Dorsolateral prefrontal cortex (tissue), 120 donors: ENCODE measurements at regions of chr2 and their contacts with region 1.

Region 1: GRCh38 chr2:158464426-158465281 is 7.9 kb downstream of the PKP4 start:
- DNase-seq: no peak
- H3K4me3 ChIP-seq: peak overlapping the region in 15 of 59 donors; percentile 4 to 36 (median 11)
- H3K27ac ChIP-seq: peak overlapping the region in 38 of 59 donors; percentile 3 to 98 (median 61)
- H3K27me3 ChIP-seq: no peaks in the 10 kb centered on the region
- CTCF ChIP-seq: peak in 54 of 56 donors; percentile 17 to 65 (median 51)

Region 2: DNA sequence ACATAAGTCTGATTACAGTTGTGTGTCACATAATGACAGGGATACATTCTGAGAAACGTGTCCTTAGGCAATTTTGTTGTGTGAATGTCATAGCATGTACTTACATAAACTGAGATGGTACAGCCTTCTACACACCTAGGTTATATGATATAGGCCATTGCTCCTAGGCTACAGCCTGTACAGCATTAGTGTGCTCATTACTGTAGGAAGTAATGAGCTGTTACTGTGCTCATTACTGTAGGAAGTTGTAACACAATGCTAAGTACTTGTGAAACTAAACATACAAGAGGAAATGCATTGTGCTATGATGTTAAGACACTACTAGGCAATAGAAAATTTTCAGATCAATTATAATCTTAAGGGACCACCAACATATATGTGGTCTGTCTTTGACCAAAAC is 290.2 kb before region 1 on chr2:
- intact Hi-C with region 1: no loop called
- DNase-seq: no peak
- H3K4me3 ChIP-seq: no peak overlapping the region
- H3K27ac ChIP-seq: no peak overlapping the region
- H3K27me3 ChIP-seq: no peaks in the 10 kb centered on the region
- CTCF ChIP-seq: no peak

Region 3: DNA sequence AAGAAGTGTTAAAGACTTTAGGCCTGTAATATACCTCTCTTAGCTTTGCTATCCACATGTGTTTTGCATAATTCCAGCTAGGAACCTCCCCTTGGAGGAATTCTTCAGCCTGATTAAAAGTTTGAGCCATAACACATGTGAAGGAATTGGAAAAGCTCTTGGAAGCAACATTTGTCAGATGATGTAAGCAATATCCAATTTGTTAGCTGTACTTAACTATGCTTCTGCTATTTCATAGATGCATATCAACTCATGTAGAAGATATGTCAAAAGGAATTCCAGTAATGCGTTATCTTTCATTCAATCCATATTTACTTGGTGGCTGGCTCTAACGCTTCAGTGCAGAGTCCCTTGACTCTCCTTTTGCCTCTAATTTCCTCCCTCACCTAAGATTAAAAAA is 38.3 kb after region 1 on chr2:
- intact Hi-C with region 1: loop called in 1 of 2 experiments (anchors 5 kb)
- DNase-seq: no peak
- H3K4me3 ChIP-seq: no peak overlapping the region
- H3K27ac ChIP-seq: no peak overlapping the region
- H3K27me3 ChIP-seq: no peaks in the 10 kb centered on the region
- CTCF ChIP-seq: no peak

Region 4: DNA sequence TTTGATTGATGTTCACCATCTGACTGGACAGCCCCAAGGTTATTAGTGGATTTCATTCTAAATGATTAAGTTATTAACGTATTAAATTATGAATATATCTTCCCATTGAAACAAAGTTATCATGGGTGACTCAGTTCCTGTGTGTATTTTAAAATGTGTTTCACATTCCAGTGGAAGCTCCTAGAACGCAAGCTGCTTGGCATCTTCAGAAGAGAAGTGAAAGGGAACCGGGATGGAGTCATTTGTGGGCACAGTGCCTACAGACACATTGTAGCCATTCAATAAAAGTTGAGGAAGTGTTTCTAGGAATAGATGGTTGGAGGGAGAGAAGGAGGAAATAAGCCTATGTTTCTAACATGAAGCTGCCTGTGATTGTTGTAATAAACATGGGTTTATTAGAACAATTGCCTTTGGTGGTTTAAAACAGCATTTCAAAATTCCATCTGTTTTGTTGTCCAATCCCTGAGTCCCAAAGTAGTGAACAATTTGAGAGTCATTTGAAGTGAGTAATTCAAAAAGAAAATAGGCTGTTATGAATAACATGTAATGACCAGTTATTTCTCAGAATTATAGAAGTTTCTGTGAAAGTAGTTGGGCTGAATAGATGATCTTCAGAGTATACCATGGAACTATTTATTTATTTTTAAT is 135.6 kb after region 1 on chr2:
- intact Hi-C with region 1: no loop called
- DNase-seq: no peak
- H3K4me3 ChIP-seq: no peak overlapping the region
- H3K27ac ChIP-seq: peak overlapping the region in 1 of 59 donors; percentile 13
- H3K27me3 ChIP-seq: no peaks in the 10 kb centered on the region
- CTCF ChIP-seq: no peak

Region 5: DNA sequence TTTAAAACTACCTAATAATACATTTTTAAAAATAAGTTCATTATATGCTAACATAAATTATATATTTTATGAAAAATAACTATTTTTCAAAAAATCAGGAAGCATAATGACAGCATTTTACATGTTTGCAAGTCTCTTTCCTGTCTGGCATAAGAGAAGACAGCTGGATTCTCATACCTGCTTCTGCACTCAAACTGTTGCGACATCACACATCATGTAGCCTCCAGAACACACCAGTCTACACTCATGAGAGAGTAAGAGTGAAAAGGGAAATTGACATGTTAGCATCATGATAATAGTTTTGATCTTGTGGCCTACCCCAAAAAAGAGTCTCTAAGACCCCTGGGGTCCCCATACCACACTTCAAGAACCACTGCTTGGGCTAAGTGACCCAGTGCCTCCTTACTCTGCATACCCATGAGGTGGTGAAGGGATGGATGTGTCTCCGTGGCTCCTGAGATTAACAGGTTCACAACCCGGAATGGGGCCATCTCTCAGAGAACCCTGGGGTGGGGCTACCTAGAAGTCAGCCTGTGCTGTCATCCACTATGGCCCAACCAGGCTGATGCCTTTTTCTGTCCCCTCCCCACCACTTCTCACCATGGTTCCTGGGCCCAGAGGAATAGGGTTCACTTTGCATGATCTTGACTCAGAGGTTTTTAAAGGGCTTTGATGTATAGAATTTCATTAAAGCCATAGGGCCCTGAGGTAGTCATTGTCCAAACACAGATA is 227.9 kb after region 1 on chr2:
- intact Hi-C with region 1: no loop called
- DNase-seq: no peak
- H3K4me3 ChIP-seq: no peak overlapping the region
- H3K27ac ChIP-seq: no peak overlapping the region
- H3K27me3 ChIP-seq: peaks cover 0 to 4% (median 0%) of the 10 kb centered on the region in 45 donors
- CTCF ChIP-seq: no peak